ENCODE measurements at regions of chr14 and their contacts with region 1.

Region 1: DNA sequence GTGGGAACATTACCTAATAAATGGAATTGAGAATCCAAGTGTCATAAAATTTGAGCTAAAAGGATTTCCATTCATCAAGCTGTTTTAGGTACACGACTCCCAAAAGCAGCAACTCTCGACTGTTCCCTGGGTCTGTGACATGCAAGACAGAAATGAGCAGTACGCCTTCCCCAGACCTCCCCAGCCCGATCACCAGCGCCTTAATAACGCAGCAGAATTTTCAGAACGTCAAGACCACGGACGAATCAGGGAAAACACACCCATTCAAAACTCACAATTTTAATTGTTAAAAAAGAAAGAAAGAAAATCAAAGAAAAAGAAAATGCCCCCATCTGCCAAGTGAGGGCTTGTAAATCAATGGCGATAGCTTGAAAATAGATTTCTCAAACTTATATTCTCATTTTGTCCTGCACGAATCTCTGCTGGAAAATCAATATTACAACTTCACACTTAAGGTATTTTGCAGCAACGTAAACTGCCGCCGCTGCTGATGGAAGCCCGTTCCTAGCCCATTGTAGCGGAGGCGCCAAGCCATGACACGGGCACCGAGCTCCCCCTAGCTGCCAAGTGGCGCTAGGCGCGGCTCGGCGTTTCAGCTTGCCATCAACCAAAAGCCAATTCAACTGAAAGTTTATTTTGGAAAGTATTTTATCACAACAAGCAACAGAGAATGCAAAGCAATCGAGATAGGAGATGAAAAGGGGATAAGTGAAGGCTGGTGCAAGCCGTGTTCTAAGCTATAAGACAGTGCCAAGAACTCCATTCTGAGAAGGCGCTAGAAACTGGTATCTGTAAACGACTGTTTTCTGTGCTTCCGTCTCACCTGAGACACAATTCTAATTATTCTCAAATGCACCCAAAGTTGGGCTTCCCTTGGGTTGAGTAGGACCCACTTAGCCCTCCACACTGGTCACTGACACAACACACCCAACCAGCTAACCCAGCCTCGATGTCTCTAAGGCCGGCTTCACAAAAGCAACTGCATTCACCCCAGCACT is 5.5 kb downstream of the BCL11B start:
- DNase-seq: peak; percentile 93
- H3K4me3 Mint-ChIP-seq: peak overlapping the region; percentile 96
- H3K27ac Mint-ChIP-seq: peak overlapping the region; percentile 100
- H3K4me1 Mint-ChIP-seq: peaks cover 52% of the 10 kb centered on the region
- H3K27me3 Mint-ChIP-seq: peaks cover under 1% of the 10 kb centered on the region

Region 2: GRCh38 chr14:97458661-97459579 is 1807.6 kb before region 1 on chr14:
- CTCF ChIA-PET with region 1: no interaction called
- POLR2A ChIA-PET with region 1: no interaction called
- intact Hi-C with region 1: loop called (anchors 5 kb)
- DNase-seq: peak; percentile 90
- H3K4me3 Mint-ChIP-seq: peak overlapping the region; percentile 96
- H3K27ac Mint-ChIP-seq: peak overlapping the region; percentile 100
- H3K4me1 Mint-ChIP-seq: peaks cover 50% of the 10 kb centered on the region
- H3K27me3 Mint-ChIP-seq: no peaks in the 10 kb centered on the region

Region 3: DNA sequence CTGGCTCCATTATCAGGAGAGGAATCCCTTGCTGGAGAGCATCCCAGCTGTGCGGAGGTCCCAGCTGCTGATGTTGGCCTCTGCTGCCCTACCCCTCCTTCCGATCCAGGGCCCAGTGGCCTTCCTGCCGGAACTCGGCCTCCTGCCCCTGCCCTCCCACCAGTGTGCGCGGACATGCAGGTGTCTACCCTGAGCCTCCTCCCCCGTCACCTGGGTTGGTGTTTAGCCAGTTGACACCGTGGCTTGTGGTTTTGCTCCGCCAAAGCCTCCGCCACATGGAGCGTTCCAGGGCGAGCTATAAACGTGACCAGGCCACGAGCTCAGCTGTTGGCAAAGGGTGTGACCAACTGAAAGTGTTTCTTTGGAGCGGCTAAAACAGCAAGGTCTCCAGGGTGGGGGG is 1098.8 kb before region 1 on chr14:
- CTCF ChIA-PET with region 1: interaction called, 12 read pairs
- POLR2A ChIA-PET with region 1: interaction called, 16 read pairs
- intact Hi-C with region 1: no loop called
- DNase-seq: peak; percentile 54
- H3K4me3 Mint-ChIP-seq: peak overlapping the region; percentile 17
- H3K27ac Mint-ChIP-seq: peak overlapping the region; percentile 97
- H3K4me1 Mint-ChIP-seq: peaks cover 67% of the 10 kb centered on the region
- H3K27me3 Mint-ChIP-seq: no peaks in the 10 kb centered on the region

Region 4: DNA sequence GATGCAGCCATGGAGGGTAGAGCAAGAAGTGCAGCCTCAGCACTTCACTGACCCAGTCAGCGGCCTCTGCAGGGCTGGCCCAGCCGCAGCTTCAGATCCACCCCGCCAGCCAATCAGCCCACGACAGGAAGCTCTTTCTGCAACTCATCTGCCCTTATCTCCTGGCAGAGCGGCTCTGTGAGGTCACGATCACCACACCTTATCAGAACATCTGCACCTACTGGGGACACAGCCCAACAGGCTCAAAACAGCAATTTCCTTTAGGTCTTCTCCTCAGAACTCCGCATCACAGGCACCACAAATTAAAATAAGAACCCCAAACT is 281.8 kb before region 1 on chr14:
- CTCF ChIA-PET with region 1: interaction called, 3 read pairs
- POLR2A ChIA-PET with region 1: interaction called, 5 read pairs
- intact Hi-C with region 1: loop called (anchors 5 kb)
- DNase-seq: peak; percentile 89
- H3K4me3 Mint-ChIP-seq: peak overlapping the region; percentile 70
- H3K27ac Mint-ChIP-seq: peak overlapping the region; percentile 95
- H3K4me1 Mint-ChIP-seq: peaks cover 35% of the 10 kb centered on the region
- H3K27me3 Mint-ChIP-seq: no peaks in the 10 kb centered on the region

Region 5: GRCh38 chr14:99224116-99224910 is 42.2 kb before region 1 on chr14:
- CTCF ChIA-PET with region 1: interaction called, 110 read pairs
- POLR2A ChIA-PET with region 1: interaction called, 425 read pairs
- intact Hi-C with region 1: no loop called
- DNase-seq: peak; percentile 47
- H3K4me3 Mint-ChIP-seq: peak overlapping the region; percentile 36
- H3K27ac Mint-ChIP-seq: peak overlapping the region; percentile 96
- H3K4me1 Mint-ChIP-seq: peaks cover 92% of the 10 kb centered on the region
- H3K27me3 Mint-ChIP-seq: no peaks in the 10 kb centered on the region

Region 6: GRCh38 chr14:99252940-99253868 is 13.3 kb before region 1 on chr14:
- CTCF ChIA-PET with region 1: interaction called, 14 read pairs
- POLR2A ChIA-PET with region 1: interaction called, 425 read pairs
- intact Hi-C with region 1: loop called (anchors 1 kb)
- DNase-seq: peak; percentile 77
- H3K4me3 Mint-ChIP-seq: peak overlapping the region; percentile 70
- H3K27ac Mint-ChIP-seq: peak overlapping the region; percentile 87
- H3K4me1 Mint-ChIP-seq: peaks cover 94% of the 10 kb centered on the region
- H3K27me3 Mint-ChIP-seq: no peaks in the 10 kb centered on the region

Region 7: DNA sequence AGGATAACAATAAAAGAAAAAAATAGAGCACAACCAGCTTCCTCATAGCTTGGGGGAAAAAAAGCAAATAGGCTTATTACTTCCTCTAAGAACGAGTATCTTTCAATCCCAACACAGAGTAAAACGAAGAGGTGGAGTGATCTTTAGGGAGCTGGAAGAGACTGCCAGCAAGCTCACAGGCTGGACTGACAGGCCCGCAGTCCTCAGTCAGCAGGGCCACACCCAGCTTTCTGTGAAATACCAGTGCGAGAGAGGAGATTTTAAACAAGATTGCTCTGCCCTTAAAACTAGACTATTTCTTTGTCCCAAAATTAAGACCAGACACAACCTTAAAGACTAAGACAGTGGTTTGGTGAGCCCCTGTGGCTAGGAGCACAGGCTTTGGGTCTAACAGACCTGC is 181.3 kb after region 1 on chr14:
- CTCF ChIA-PET with region 1: no interaction called
- POLR2A ChIA-PET with region 1: no interaction called
- intact Hi-C with region 1: no loop called
- DNase-seq: no peak
- H3K4me3 Mint-ChIP-seq: no peak overlapping the region
- H3K27ac Mint-ChIP-seq: no peak overlapping the region
- H3K4me1 Mint-ChIP-seq: peaks cover 10% of the 10 kb centered on the region
- H3K27me3 Mint-ChIP-seq: no peaks in the 10 kb centered on the region